K562 (cell line): ENCODE measurements at regions of chr5 and their contacts with region 1.

Region 1: DNA sequence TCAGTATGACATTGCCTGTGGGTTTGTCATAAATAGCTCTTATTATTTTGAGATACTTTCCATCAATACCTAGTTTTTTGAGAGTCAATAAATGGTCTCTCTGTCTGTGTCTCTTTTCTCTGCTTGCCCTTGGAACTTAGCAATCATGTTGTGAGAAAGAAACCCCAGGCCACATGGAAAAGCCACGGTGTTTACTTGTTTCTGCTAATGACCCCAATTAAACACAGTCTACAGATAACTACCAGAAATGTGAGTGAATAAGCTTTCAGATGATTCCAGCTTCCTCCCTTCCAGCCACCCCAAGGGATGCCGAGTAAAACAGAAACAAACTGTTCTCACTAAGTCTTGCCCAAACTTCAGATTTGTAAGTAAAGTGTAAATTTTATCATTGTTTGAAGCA is 584.9 kb downstream of the MAT2B start:
- DNase-seq: no peak
- ATAC-seq: no peak
- H3K4me3 ChIP-seq: no peak overlapping the region
- H3K27ac ChIP-seq: no peak overlapping the region
- H3K4me1 ChIP-seq: no peaks in the 10 kb centered on the region
- H3K27me3 ChIP-seq: no peaks in the 10 kb centered on the region
- CTCF ChIP-seq: no peak
- EP300 ChIP-seq: no peak
- POLR2A ChIP-seq: no peak
- RAD21 ChIP-seq: no peak

Region 2: DNA sequence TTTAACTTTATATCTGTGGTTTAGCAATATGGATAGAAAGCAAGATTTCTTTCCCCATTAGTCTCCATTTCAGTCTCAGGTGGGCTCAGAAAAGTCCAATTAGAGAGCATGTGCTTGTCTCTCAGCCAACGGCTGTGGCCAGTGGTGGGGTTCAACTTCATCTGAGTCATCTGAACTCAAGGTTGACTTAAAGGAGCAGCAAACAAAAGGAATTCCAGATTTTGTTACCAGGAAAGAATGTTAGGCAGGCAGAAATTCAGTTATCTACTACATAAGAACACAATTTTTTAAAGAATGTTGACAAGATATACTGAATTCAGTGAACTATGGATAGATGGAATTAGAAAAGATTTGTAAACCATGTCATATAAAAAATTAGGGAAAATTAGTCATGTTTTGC is 199.2 kb after region 1 on chr5:
- CTCF ChIA-PET with region 1: no interaction called
- POLR2A ChIA-PET with region 1: no interaction called
- in situ Hi-C with region 1: no loop called
- intact Hi-C with region 1: no loop called
- DNase-seq: no peak
- ATAC-seq: no peak
- H3K4me3 ChIP-seq: no peak overlapping the region
- H3K27ac ChIP-seq: no peak overlapping the region
- H3K4me1 ChIP-seq: no peaks in the 10 kb centered on the region
- H3K27me3 ChIP-seq: no peaks in the 10 kb centered on the region
- CTCF ChIP-seq: no peak
- EP300 ChIP-seq: no peak
- POLR2A ChIP-seq: no peak
- RAD21 ChIP-seq: no peak

Region 3: DNA sequence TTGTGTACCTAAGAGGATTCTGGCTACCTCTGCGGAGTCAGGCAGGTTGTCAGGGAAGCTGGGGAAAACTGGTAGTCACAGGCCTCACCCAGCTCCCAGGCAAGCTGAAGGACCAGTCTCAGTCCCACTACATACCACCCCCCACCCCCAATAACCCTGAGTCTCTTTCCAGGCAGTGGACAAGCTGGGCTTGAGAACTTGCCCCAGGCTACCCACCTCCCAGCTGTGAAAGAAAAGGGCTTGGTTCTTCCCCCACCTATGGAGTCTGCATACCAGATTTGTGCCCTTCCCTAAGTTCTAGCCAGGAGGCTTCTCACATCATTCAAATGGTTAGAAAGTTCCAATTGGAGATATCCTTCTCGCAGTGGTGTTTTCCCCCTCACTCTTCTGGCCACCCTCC is 1093.8 kb after region 1 on chr5:
- CTCF ChIA-PET with region 1: no interaction called
- POLR2A ChIA-PET with region 1: no interaction called
- in situ Hi-C with region 1: no loop called
- intact Hi-C with region 1: loop called (anchors 5 kb)
- DNase-seq: no peak
- ATAC-seq: no peak
- H3K4me3 ChIP-seq: no peak overlapping the region
- H3K27ac ChIP-seq: no peak overlapping the region
- H3K4me1 ChIP-seq: no peaks in the 10 kb centered on the region
- H3K27me3 ChIP-seq: no peaks in the 10 kb centered on the region
- CTCF ChIP-seq: no peak
- EP300 ChIP-seq: no peak
- POLR2A ChIP-seq: no peak
- RAD21 ChIP-seq: no peak